Naive thymus-derived CD4-positive, alpha-beta T cell (primary cell): ENCODE measurements at regions of chr19 and their contacts with region 1.

Region 1: GRCh38 chr19:50368649-50369570 is 3.5 kb upstream of the NAPSA start:
- DNase-seq: peak; percentile 56 to 83 (median 74)
- ATAC-seq: peak; percentile 91
- H3K4me3 ChIP-seq: peak overlapping the region; percentile 69
- H3K4me3 Mint-ChIP-seq: peak overlapping the region; percentile 68 to 97 (median 93)
- H3K27ac ChIP-seq: peak overlapping the region; percentile 78
- H3K27ac Mint-ChIP-seq: peak overlapping the region; percentile 60 to 97 (median 91)
- H3K4me1 ChIP-seq: peaks cover under 1 to 4% of the 10 kb centered on the region in 2 donors
- H3K4me1 Mint-ChIP-seq: peaks cover 8 to 45% (median 36%) of the 10 kb centered on the region in 7 donors
- H3K27me3 ChIP-seq: no peaks in the 10 kb centered on the region
- H3K27me3 Mint-ChIP-seq: no peaks in the 10 kb centered on the region

Region 2: DNA sequence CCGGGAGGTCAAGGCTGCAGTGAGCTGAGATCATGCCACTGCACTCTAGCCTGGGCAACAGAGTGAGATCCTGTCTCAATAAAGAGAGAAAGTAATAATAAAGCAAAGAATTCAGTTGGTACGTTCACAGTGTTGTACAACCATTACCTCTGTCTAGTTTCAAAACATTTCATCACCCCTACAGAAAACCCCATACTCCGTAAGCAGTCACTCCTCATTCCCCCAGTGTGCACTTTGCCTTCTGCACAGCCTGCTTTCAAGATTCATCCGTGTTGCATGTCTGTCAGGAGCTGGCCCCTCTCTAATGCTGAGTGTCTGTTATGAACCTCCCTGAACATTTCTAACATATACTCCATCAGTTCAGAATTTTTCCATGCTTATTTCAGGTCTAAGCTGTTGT is 24.7 kb after region 1 on chr19:
- CTCF ChIA-PET with region 1: no interaction called
- POLR2A ChIA-PET with region 1: no interaction called
- intact Hi-C with region 1: no loop called
- DNase-seq: no peak
- ATAC-seq: no peak
- H3K4me3 ChIP-seq: no peak overlapping the region
- H3K4me3 Mint-ChIP-seq: no peak overlapping the region
- H3K27ac ChIP-seq: no peak overlapping the region
- H3K27ac Mint-ChIP-seq: no peak overlapping the region
- H3K4me1 ChIP-seq: no peaks in the 10 kb centered on the region
- H3K4me1 Mint-ChIP-seq: peaks cover 0 to 7% (median 4%) of the 10 kb centered on the region in 7 donors
- H3K27me3 ChIP-seq: no peaks in the 10 kb centered on the region
- H3K27me3 Mint-ChIP-seq: no peaks in the 10 kb centered on the region

Region 3: GRCh38 chr19:50414864-50415660 is 46.2 kb after region 1 on chr19:
- CTCF ChIA-PET with region 1: interaction called, 5 read pairs
- POLR2A ChIA-PET with region 1: no interaction called
- intact Hi-C with region 1: loop called (anchors 1 kb)
- DNase-seq: peak; percentile 45 to 79 (median 66)
- ATAC-seq: peak; percentile 85
- H3K4me3 ChIP-seq: no peak overlapping the region
- H3K4me3 Mint-ChIP-seq: no peak overlapping the region
- H3K27ac ChIP-seq: no peak overlapping the region
- H3K27ac Mint-ChIP-seq: no peak overlapping the region
- H3K4me1 ChIP-seq: no peaks in the 10 kb centered on the region
- H3K4me1 Mint-ChIP-seq: peaks cover 8 to 15% (median 9%) of the 10 kb centered on the region in 7 donors
- H3K27me3 ChIP-seq: no peaks in the 10 kb centered on the region
- H3K27me3 Mint-ChIP-seq: peaks cover 8 to 17% (median 11%) of the 10 kb centered on the region in 5 donors

Region 4: GRCh38 chr19:50695251-50696093 is 326.6 kb after region 1 on chr19:
- CTCF ChIA-PET with region 1: no interaction called
- POLR2A ChIA-PET with region 1: no interaction called
- intact Hi-C with region 1: no loop called
- DNase-seq: peak in 4 of 9 donors; percentile 21 to 64 (median 22)
- ATAC-seq: peak; percentile 53
- H3K4me3 ChIP-seq: no peak overlapping the region
- H3K4me3 Mint-ChIP-seq: no peak overlapping the region
- H3K27ac ChIP-seq: no peak overlapping the region
- H3K27ac Mint-ChIP-seq: no peak overlapping the region
- H3K4me1 ChIP-seq: no peaks in the 10 kb centered on the region
- H3K4me1 Mint-ChIP-seq: peaks cover 0 to 4% (median 0%) of the 10 kb centered on the region in 7 donors
- H3K27me3 ChIP-seq: peaks cover 0 to 14% of the 10 kb centered on the region in 2 donors
- H3K27me3 Mint-ChIP-seq: peaks cover 35 to 80% (median 66%) of the 10 kb centered on the region in 5 donors